Dorsolateral prefrontal cortex (tissue), 120 donors: ENCODE measurements at regions of chr5 and their contacts with region 1.

Region 1: DNA sequence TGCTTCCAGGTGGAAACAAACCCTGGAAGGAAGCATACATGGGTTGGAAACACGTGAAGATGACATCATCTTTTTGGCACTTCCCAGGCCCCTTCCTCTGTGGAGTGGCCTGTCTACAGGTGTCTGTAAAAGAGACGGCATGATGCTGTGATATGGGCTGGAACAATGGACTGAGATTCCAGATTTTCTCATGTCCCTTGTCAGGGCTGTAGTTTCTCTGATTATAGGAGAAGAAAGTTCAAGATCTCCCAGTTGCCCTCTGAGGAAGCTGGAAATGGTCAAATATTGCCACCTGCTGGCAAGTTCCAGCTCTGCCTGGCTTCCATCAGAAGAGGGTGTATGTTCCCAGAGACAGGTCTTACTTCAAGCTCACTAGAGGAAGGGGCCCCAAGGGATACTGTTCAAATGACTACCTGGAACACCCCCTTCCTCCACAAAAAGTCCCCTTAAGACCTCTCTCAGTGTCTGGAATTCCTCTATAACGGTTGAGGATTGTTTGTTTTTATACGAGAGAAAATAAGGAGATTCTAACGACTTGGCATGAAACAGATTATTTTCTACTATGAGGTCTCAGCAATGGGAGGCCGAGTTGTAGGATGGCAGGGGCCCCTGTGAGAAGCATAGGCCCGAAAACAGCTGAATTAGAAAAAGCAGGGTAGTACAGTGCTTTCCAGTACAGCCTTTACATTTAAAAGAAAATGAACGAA is 7.3 kb upstream of the ANXA6 start:
- DNase-seq: peak in 9 of 10 donors; percentile 55 to 85 (median 77)
- H3K4me3 ChIP-seq: no peak overlapping the region
- H3K27ac ChIP-seq: no peak overlapping the region
- H3K27me3 ChIP-seq: no peaks in the 10 kb centered on the region
- CTCF ChIP-seq: peak; percentile 73 to 99 (median 92)

Region 2: DNA sequence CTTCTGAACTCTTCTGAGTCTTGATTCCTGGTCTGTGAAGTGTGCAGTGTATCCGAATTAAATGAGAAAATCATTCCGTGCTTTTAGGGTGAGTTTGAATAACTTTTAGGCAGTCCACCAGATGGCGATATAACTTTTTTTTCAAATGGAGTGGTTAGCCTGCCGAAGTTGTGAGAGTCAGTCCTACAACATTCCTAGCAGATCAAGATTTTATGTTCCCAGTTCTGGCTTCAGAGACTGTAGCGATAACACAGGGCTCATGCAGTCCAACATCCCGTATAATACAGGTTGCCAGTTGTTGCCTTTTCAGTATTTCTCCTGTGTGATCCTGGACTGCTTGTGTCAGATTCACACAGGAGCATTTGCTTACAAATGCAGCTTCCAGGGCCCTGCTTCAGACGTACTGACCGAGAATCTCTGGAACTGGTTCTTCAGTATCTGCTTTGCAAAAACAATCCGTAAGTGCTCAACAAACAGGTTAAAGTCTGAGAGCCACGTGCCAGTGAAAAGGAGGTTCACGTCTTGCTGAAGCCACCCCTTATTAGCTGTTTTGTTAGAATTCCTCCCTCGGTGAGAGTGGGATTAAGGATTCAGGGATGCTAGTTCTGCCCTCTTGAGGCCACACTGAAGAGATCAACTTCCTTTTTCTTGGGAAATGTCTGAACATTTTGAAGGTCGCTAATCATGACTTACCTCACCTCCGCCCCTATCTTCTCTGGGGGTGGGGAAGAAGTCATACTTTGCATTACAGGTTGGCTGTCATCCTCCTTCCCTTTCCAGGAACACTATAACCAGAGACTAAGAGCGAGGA is 363.5 kb before region 1 on chr5:
- intact Hi-C with region 1: loop called in 1 of 2 experiments (anchors 10 kb)
- DNase-seq: no peak
- H3K4me3 ChIP-seq: peak overlapping the region in 53 of 59 donors; percentile 11 to 62 (median 38)
- H3K27ac ChIP-seq: peak overlapping the region in 13 of 59 donors; percentile 6 to 64 (median 34)
- H3K27me3 ChIP-seq: no peaks in the 10 kb centered on the region
- CTCF ChIP-seq: peak in 55 of 56 donors; percentile 18 to 83 (median 65)

Region 3: DNA sequence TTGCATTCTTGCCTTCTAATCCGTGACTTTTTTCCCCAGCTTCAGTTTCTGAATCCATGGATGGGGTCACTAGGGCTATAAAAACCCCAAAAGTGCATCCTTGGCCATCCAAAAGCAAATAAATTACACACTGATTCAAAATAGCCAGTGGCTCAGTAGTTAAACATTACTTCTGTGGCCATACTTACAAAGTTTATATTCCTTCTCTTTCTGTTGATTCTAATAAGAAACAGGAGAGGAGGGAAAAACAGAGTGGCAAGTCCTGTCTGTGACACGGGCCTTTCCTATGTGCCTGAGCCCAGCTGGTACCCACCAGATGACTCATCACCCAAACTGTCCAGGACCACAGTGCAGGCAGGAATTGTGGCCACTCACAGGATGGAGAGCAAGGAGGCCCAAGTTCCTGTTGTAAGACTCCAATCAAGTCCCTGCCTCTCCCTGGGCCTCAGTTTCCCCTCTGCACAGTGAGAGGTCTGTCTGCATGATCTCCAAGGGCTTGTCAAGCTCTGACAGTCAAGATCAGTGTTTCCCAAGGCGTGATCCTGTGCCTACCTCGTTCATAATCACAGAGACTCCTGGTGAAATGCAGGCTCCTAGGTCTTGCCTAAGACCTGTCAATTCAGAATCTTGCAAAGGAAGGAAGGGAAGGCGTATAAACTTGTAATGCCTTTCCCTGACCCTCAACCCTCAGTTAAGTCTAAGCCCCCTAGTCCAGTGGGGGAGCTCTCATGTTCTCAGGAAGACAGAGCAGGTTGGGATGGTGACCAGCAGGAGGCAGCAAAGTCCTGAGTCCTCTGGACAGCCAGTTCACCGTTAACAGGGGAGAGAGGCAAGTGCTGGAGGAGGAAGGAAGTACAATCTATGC is 113.5 kb before region 1 on chr5:
- intact Hi-C with region 1: loop called (anchors 2 to 5 kb)
- DNase-seq: peak in 9 of 10 donors; percentile 57 to 82 (median 74)
- H3K4me3 ChIP-seq: no peak overlapping the region
- H3K27ac ChIP-seq: peak overlapping the region in 1 of 59 donors; percentile 36
- H3K27me3 ChIP-seq: no peaks in the 10 kb centered on the region
- CTCF ChIP-seq: peak; percentile 43 to 93 (median 83)

Region 4: DNA sequence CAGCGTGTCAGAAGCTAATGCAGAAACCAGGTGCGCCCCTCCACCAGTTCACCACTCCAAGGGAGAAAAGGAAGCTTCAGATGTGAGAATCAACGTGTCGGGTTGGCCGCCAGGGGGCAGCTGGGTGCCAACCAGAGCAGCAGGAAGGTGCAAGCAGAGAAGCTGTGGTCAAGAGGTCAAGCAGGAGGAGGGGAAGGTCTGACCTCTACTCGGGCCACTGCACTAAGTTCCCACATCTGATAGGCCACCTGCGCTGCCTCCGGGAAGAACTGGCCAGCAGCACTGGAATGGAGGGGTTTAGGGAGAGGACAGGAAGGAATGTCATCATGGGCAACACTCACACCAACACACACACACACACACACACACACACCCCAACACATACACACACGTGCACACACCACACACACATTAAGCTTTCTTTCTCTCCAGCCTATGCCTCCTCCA is 38.6 kb before region 1 on chr5:
- intact Hi-C with region 1: loop called (anchors 1 to 2 kb)
- DNase-seq: peak; percentile 64 to 81 (median 72)
- H3K4me3 ChIP-seq: no peak overlapping the region
- H3K27ac ChIP-seq: peak overlapping the region in 1 of 59 donors; percentile 40
- H3K27me3 ChIP-seq: no peaks in the 10 kb centered on the region
- CTCF ChIP-seq: peak; percentile 55 to 89 (median 80)